GM12878 (cell line): ENCODE measurements at regions of chr10 and their contacts with region 1.

Region 1: GRCh38 chr10:18472977-18473376 is 178.4 kb downstream of the NSUN6 start:
- DNase-seq: no peak
- ATAC-seq: peak; percentile 70
- H3K4me3 ChIP-seq: no peak overlapping the region
- H3K27ac ChIP-seq: no peak overlapping the region
- H3K4me1 ChIP-seq: no peaks in the 10 kb centered on the region
- H3K27me3 ChIP-seq: no peaks in the 10 kb centered on the region
- CTCF ChIP-seq: peak; percentile 21 to 43 (median 32); a peak in 4 of 6 replicates
- EP300 ChIP-seq: no peak
- POLR2A ChIP-seq: no peak
- RAD21 ChIP-seq: no peak

Region 2: GRCh38 chr10:18312374-18313139 is 160.4 kb before region 1 on chr10:
- CTCF ChIA-PET with region 1: interaction called, 40 read pairs
- POLR2A ChIA-PET with region 1: no interaction called
- RAD21 ChIA-PET with region 1: interaction called, 20 read pairs
- SMC1A ChIA-PET with region 1: interaction called, 13 read pairs
- in situ Hi-C with region 1: no loop called
- intact Hi-C with region 1: no loop called
- DNase-seq: no peak
- ATAC-seq: peak; percentile 91
- H3K4me3 ChIP-seq: no peak overlapping the region
- H3K27ac ChIP-seq: no peak overlapping the region
- H3K4me1 ChIP-seq: no peaks in the 10 kb centered on the region
- H3K27me3 ChIP-seq: no peaks in the 10 kb centered on the region
- CTCF ChIP-seq: peak; percentile 50 to 77 (median 52); a peak in 5 of 6 replicates
- EP300 ChIP-seq: no peak
- POLR2A ChIP-seq: no peak
- RAD21 ChIP-seq: peak; percentile 68

Region 3: GRCh38 chr10:18409599-18410397 is 63.2 kb before region 1 on chr10:
- CTCF ChIA-PET with region 1: interaction called, 11 read pairs
- POLR2A ChIA-PET with region 1: interaction called, 3 read pairs
- RAD21 ChIA-PET with region 1: interaction called, 21 read pairs
- SMC1A ChIA-PET with region 1: interaction called, 10 read pairs
- in situ Hi-C with region 1: no loop called
- intact Hi-C with region 1: loop called (anchors 5 kb)
- DNase-seq: no peak
- ATAC-seq: peak; percentile 69
- H3K4me3 ChIP-seq: no peak overlapping the region
- H3K27ac ChIP-seq: no peak overlapping the region
- H3K4me1 ChIP-seq: no peaks in the 10 kb centered on the region
- H3K27me3 ChIP-seq: no peaks in the 10 kb centered on the region
- CTCF ChIP-seq: no peak
- EP300 ChIP-seq: peak in 1 of 2 experiments; percentile 48; a peak in 3 of 4 replicates
- POLR2A ChIP-seq: no peak
- RAD21 ChIP-seq: no peak

Region 4: DNA sequence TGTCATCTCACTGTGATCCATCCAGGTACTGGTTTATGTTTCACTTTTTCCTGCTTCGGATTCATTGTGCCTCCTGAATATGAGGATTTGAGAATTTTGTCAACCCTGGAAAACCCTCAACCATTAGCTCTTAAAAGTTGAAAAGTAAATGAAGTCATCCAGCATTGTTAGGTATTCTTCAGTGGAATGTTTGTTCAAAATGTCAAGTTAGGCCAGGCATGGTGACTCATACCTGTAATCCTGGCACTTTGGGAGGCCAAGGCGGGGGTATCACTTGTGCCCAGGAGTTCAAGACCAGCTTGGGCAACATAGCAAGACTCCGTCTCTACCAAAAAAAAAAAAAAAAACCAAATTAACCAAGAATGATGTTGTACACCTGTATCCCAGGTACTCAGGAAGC is 43.6 kb before region 1 on chr10:
- CTCF ChIA-PET with region 1: interaction called, 22 read pairs
- POLR2A ChIA-PET with region 1: interaction called, 3 read pairs
- RAD21 ChIA-PET with region 1: interaction called, 17 read pairs
- SMC1A ChIA-PET with region 1: interaction called, 50 read pairs
- in situ Hi-C with region 1: no loop called
- intact Hi-C with region 1: loop called (anchors 5 kb)
- DNase-seq: no peak
- ATAC-seq: no peak
- H3K4me3 ChIP-seq: no peak overlapping the region
- H3K27ac ChIP-seq: no peak overlapping the region
- H3K4me1 ChIP-seq: no peaks in the 10 kb centered on the region
- H3K27me3 ChIP-seq: no peaks in the 10 kb centered on the region
- CTCF ChIP-seq: no peak
- EP300 ChIP-seq: no peak
- POLR2A ChIP-seq: no peak
- RAD21 ChIP-seq: no peak

Region 5: DNA sequence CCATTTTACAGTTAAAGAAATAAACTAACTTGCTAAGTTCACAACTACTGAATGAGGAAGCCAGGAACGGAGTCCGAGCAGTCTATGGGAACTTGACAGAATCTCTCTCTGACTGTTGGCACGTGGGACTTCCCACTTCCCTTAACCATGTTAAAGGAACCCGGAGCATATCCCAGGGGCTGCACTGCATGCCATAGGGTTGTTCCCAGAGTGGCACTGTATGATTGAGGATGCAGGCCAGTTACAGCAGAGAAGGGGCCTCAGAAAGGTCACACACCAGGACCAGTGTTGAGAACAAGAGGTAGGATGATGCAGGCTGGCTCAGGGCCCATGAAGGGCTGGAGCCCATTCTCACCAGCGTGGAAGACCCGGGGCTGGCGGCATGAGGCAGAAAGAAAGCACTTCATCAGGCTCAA is 23.4 kb before region 1 on chr10:
- CTCF ChIA-PET with region 1: interaction called, 5 read pairs
- POLR2A ChIA-PET with region 1: interaction called, 3 read pairs
- RAD21 ChIA-PET with region 1: interaction called, 20 read pairs
- SMC1A ChIA-PET with region 1: interaction called, 20 read pairs
- in situ Hi-C with region 1: no loop called
- intact Hi-C with region 1: no loop called
- DNase-seq: no peak
- ATAC-seq: peak; percentile 51
- H3K4me3 ChIP-seq: no peak overlapping the region
- H3K27ac ChIP-seq: no peak overlapping the region
- H3K4me1 ChIP-seq: no peaks in the 10 kb centered on the region
- H3K27me3 ChIP-seq: no peaks in the 10 kb centered on the region
- CTCF ChIP-seq: no peak
- EP300 ChIP-seq: no peak
- POLR2A ChIP-seq: no peak
- RAD21 ChIP-seq: no peak